CD4-positive, alpha-beta T cell (primary cell): ENCODE measurements at regions of chr2 and their contacts with region 1.

Region 1: DNA sequence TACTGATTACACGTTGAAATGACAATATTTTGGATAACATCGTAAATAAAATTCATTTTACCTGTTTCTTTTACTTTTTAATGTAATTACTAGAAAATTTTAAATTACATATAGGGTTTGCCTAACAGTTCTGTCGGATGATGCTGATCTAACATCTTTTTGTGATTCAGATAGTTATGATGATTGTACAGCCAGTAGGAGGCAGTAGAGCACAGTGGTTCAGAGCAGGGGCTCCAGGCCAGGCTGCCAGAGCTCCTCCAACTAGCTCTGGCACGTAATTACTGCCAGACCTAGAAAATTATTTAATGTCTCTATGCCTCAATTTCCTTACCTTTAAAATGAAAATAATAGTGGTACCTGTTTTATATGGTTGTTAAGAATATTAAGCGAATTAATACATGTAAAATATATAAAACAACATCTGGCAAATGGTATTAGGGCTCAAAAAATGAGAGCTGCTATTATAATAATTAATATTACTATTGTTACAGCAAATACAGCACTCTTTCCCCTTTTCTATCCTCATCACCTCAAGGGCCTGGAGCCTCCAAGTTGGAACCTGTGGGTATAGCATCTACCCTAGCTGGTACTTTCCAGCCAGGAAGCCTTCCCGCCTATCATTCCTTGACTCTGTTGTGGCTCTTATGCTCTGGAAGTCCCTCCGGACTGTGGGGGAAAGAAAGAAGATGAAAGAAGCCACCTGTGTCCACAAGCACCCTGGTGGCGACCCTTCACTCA is 47.7 kb upstream of the PLA2R1 start:
- DNase-seq: peak in 13 of 14 experiments; percentile 11 to 78 (median 31)
- ATAC-seq: peak; percentile 84
- H3K4me3 ChIP-seq: no peak overlapping the region
- H3K4me3 Mint-ChIP-seq: no peak overlapping the region
- H3K27ac ChIP-seq: no peak overlapping the region
- H3K27ac Mint-ChIP-seq: no peak overlapping the region
- H3K4me1 ChIP-seq: no peaks in the 10 kb centered on the region
- H3K4me1 Mint-ChIP-seq: no peaks in the 10 kb centered on the region
- H3K27me3 ChIP-seq: peaks cover 0 to 4% of the 10 kb centered on the region in 2 experiments
- H3K27me3 Mint-ChIP-seq: peaks cover 6% of the 10 kb centered on the region
- CTCF ChIP-seq: peak; percentile 81

Region 2: GRCh38 chr2:159996792-159997546 is 113.1 kb before region 1 on chr2:
- CTCF ChIA-PET with region 1: no interaction called
- POLR2A ChIA-PET with region 1: no interaction called
- intact Hi-C with region 1: no loop called
- DNase-seq: no peak
- ATAC-seq: no peak
- H3K4me3 ChIP-seq: no peak overlapping the region
- H3K4me3 Mint-ChIP-seq: no peak overlapping the region
- H3K27ac ChIP-seq: no peak overlapping the region
- H3K27ac Mint-ChIP-seq: no peak overlapping the region
- H3K4me1 ChIP-seq: no peaks in the 10 kb centered on the region
- H3K4me1 Mint-ChIP-seq: no peaks in the 10 kb centered on the region
- H3K27me3 ChIP-seq: peaks cover 0 to 4% of the 10 kb centered on the region in 2 experiments
- H3K27me3 Mint-ChIP-seq: peaks cover 12% of the 10 kb centered on the region
- CTCF ChIP-seq: no peak

Region 3: DNA sequence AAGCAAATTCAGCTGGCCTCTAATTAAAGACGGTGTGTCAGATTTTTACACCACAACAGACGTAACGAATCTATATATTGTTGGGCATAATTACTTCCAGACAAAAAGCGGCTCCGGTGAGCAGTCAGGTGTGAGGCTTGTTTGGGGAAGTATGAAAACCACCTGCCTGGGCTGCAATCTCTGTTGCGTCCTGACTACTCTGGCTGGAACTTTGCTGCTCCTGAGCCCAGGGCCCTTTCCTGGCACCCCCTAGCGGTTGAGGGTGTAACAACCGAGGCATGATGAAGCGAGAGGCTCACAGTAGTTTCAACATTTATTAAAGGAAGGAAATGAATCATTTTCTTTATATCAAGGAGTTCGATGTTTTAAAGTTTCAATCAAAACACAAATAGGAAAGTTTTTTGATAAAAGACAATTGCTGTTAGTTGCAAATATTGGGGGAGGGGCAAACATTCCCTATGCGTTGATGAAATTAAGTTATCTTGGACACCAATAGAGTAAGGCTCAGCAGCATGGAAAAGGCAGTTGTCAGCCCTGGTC is 100.6 kb after region 1 on chr2:
- CTCF ChIA-PET with region 1: interaction called, 6 read pairs
- POLR2A ChIA-PET with region 1: interaction called, 3 read pairs
- intact Hi-C with region 1: loop called (anchors 1 to 2 kb)
- DNase-seq: peak; percentile 50 to 81 (median 61)
- ATAC-seq: peak; percentile 90
- H3K4me3 ChIP-seq: no peak overlapping the region
- H3K4me3 Mint-ChIP-seq: no peak overlapping the region
- H3K27ac ChIP-seq: no peak overlapping the region
- H3K27ac Mint-ChIP-seq: no peak overlapping the region
- H3K4me1 ChIP-seq: no peaks in the 10 kb centered on the region
- H3K4me1 Mint-ChIP-seq: peaks cover 6% of the 10 kb centered on the region
- H3K27me3 ChIP-seq: no peaks in the 10 kb centered on the region
- H3K27me3 Mint-ChIP-seq: no peaks in the 10 kb centered on the region
- CTCF ChIP-seq: peak; percentile 84

Region 4: DNA sequence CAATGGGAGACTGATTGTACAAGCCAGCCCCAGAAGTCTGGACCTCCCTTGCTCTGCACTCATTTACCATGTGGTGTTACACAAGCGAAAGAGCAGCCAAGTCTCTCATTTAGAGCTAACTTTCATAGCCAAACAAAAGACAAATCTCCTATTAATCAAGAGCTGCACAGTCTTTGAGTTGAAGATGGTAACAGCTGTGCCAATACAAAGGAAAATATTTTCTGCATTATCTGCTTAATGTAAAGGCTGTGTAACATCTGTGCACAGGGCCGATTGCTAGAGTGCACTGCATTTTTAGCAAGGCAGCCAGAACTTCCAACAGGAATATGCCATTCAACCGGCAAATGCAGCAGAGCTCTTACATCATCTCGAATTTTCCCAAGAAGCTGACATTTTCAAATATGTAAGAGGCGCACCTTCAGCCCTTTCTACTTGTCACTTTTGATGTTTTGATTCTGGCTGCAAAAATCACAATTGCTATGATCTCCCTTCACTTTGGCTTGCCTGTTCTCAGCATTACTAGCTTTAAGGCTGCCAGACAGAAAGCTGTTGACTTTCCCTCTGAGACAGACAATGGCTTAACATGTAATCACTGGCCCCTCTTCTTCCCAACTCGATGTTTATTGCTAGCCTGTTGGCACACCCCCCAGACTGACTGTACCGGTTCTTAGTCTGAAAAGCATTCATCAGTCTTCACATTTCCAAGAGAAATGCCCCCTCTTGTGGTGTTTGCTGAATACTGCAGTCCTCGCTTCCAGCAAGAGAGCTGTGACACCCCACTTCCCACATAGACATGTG is 953.3 kb after region 1 on chr2:
- CTCF ChIA-PET with region 1: interaction called, 3 read pairs
- POLR2A ChIA-PET with region 1: no interaction called
- intact Hi-C with region 1: loop called in 1 of 2 experiments (anchors 5 kb)
- DNase-seq: peak; percentile 36 to 81 (median 54)
- ATAC-seq: peak; percentile 94
- H3K4me3 ChIP-seq: no peak overlapping the region
- H3K4me3 Mint-ChIP-seq: no peak overlapping the region
- H3K27ac ChIP-seq: no peak overlapping the region
- H3K27ac Mint-ChIP-seq: no peak overlapping the region
- H3K4me1 ChIP-seq: peaks cover 4% of the 10 kb centered on the region
- H3K4me1 Mint-ChIP-seq: peaks cover 5% of the 10 kb centered on the region
- H3K27me3 ChIP-seq: no peaks in the 10 kb centered on the region
- H3K27me3 Mint-ChIP-seq: no peaks in the 10 kb centered on the region
- CTCF ChIP-seq: peak; percentile 92